Endothelial cell of umbilical vein (primary cell): ENCODE measurements at regions of chr6 and their contacts with region 1.

Region 1: GRCh38 chr6:87293508-87293907 is 28.9 kb upstream of the SMIM8 start:
- DNase-seq: no peak
- H3K4me3 ChIP-seq: no peak overlapping the region
- H3K27ac ChIP-seq: no peak overlapping the region
- H3K4me1 ChIP-seq: no peaks in the 10 kb centered on the region
- H3K27me3 ChIP-seq: peaks cover 8 to 16% of the 10 kb centered on the region in 2 experiments
- CTCF ChIP-seq: no peak
- POLR2A ChIP-seq: no peak

Region 2: DNA sequence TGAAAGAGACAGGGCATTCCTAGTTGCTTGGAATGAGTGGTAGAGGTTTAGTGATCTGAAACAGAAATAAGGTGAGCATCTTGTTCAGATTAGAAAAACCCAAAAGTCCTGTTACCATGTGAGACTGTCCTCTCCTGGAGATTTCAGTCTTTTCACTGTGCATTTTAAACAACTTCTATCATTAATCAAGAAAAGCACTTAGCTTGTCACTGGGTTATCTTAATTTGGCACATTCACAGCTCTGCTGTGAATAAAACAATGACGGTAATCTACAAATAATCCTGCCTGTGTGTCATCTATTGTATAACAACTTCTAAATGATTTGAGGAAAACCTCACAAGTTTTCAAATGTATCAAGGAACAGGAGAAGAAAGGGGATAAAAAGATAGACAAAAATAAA is 19.4 kb after region 1 on chr6:
- CTCF ChIA-PET with region 1: no interaction called
- POLR2A ChIA-PET with region 1: no interaction called
- dilution Hi-C with region 1: no loop called
- intact Hi-C with region 1: loop called (anchors 1 kb)
- DNase-seq: no peak
- H3K4me3 ChIP-seq: no peak overlapping the region
- H3K27ac ChIP-seq: no peak overlapping the region
- H3K4me1 ChIP-seq: no peaks in the 10 kb centered on the region
- H3K27me3 ChIP-seq: peaks cover 7 to 13% of the 10 kb centered on the region in 2 experiments
- CTCF ChIP-seq: no peak
- POLR2A ChIP-seq: no peak

Region 3: DNA sequence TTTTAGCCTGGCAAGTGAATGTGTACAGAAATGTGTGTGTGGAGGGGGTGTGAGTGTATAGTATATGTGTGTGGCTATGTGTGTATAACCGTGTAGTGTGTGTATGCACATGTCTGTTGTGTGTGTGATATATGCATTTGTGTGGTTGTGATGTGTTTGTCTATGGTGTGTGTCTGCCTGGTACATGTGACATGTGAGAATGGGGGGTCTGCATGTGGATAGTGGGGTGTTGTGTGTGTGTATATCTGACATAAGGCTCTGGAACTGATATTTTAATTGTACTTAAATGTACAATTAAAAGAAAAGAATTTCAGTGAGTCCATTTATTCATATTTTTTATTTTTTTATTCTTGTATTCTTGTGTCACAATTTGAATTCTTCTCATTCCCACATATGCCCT is 929.8 kb after region 1 on chr6:
- CTCF ChIA-PET with region 1: no interaction called
- POLR2A ChIA-PET with region 1: no interaction called
- dilution Hi-C with region 1: no loop called
- intact Hi-C with region 1: no loop called
- DNase-seq: no peak
- H3K4me3 ChIP-seq: no peak overlapping the region
- H3K27ac ChIP-seq: no peak overlapping the region
- H3K4me1 ChIP-seq: no peaks in the 10 kb centered on the region
- H3K27me3 ChIP-seq: no peaks in the 10 kb centered on the region
- CTCF ChIP-seq: no peak
- POLR2A ChIP-seq: no peak